ENCODE measurements at regions of chr11 and their contacts with region 1.

Region 1: GRCh38 chr11:11787305-11788062 is 54.3 kb upstream of the USP47 start:
- DNase-seq: peak; percentile 33 to 79 (median 71)
- ATAC-seq: peak; percentile 82
- H3K4me3 ChIP-seq: no peak overlapping the region
- H3K4me3 Mint-ChIP-seq: no peak overlapping the region
- H3K27ac ChIP-seq: no peak overlapping the region
- H3K27ac Mint-ChIP-seq: no peak overlapping the region
- H3K4me1 ChIP-seq: no peaks in the 10 kb centered on the region
- H3K4me1 Mint-ChIP-seq: no peaks in the 10 kb centered on the region
- H3K27me3 ChIP-seq: no peaks in the 10 kb centered on the region
- H3K27me3 Mint-ChIP-seq: peaks cover 7% of the 10 kb centered on the region
- CTCF ChIP-seq: peak; percentile 83

Region 2: DNA sequence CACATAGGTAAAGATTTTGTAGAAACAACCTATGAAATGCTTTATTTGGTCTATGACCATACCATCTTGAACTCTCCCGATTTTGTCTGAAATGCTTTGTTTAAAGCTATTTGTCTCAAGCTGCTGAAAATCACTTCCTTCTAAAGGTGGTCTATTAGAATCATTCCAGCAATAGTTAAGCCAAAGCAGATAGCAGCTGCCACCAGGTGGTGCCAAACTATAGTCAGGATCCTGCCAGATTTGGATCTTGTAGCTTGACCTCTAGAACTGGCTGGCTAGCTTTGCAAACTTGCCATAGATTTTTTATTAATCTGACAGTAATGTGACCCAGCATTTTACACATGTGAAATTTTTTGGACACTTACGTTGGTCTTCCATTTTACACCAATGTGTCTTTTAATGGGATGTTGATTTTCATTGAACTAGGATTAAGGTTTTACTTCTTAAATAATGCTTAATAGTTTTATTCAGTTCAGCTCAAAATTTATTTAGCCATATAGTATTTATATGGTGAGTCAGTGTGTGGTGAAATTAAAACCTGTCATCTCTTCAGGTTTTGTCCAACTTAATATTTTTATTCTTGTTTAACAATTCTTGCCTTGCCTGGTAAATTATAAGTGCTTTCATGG is 1016.7 kb before region 1 on chr11:
- CTCF ChIA-PET with region 1: interaction called, 10 read pairs
- POLR2A ChIA-PET with region 1: no interaction called
- intact Hi-C with region 1: loop called in 1 of 2 experiments (anchors 5 kb)
- DNase-seq: peak in 4 of 9 experiments; percentile 14 to 41 (median 29)
- ATAC-seq: no peak
- H3K4me3 ChIP-seq: no peak overlapping the region
- H3K4me3 Mint-ChIP-seq: no peak overlapping the region
- H3K27ac ChIP-seq: no peak overlapping the region
- H3K27ac Mint-ChIP-seq: no peak overlapping the region
- H3K4me1 ChIP-seq: no peaks in the 10 kb centered on the region
- H3K4me1 Mint-ChIP-seq: no peaks in the 10 kb centered on the region
- H3K27me3 ChIP-seq: no peaks in the 10 kb centered on the region
- H3K27me3 Mint-ChIP-seq: no peaks in the 10 kb centered on the region
- CTCF ChIP-seq: peak; percentile 52

Region 3: DNA sequence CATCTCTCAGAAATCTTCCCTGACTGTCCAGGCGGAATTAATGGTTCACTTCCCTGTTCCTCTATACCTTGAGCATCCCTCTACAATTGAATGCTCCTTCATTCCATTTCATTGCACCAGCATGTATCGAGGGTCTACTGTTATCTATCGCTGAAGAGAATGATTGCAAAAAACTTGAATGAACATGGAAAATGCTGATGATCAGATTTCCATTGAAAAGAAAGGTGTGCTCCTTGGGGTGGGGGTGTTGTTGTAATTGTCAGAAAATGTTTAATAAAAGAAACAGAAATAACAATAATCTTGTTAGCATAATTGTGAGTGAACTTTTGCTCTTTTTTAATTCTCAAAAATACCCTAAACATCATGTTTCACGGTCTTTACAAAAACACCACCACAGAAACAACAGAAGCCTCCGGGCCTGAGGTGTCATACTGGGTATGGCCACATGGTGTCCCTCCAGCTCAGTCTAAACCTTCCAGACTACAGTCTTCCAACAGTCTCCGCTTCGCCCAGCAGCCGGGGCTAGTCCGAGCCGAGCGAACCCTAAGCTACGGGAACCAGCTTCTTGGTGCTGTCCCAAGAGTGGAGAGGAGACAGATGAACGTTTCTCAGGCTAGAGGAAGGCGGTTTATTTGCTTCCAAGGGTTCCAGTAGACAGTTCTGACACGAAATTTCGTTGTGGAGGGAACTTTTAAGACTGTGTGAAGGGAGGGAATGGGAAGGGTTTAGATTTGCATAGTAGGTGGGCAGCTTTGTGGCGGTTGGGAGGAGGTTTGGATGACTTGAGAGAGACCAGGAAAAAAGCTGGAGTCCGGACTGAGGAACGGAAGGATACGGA is 853.8 kb before region 1 on chr11:
- CTCF ChIA-PET with region 1: interaction called, 23 read pairs
- POLR2A ChIA-PET with region 1: no interaction called
- intact Hi-C with region 1: loop called (anchors 1 kb)
- DNase-seq: peak; percentile 66 to 87 (median 82)
- ATAC-seq: peak; percentile 88
- H3K4me3 ChIP-seq: peak overlapping the region; percentile 50 to 53
- H3K4me3 Mint-ChIP-seq: peak overlapping the region; percentile 83
- H3K27ac ChIP-seq: no peak overlapping the region
- H3K27ac Mint-ChIP-seq: no peak overlapping the region
- H3K4me1 ChIP-seq: no peaks in the 10 kb centered on the region
- H3K4me1 Mint-ChIP-seq: peaks cover 20% of the 10 kb centered on the region
- H3K27me3 ChIP-seq: peaks cover 7 to 19% of the 10 kb centered on the region in 2 experiments
- H3K27me3 Mint-ChIP-seq: peaks cover 18% of the 10 kb centered on the region
- CTCF ChIP-seq: peak; percentile 98

Region 4: GRCh38 chr11:11036848-11037732 is 750.4 kb before region 1 on chr11:
- CTCF ChIA-PET with region 1: interaction called, 33 read pairs
- POLR2A ChIA-PET with region 1: interaction called, 3 read pairs
- intact Hi-C with region 1: no loop called
- DNase-seq: peak in 5 of 9 experiments; percentile 27 to 81 (median 51)
- ATAC-seq: peak; percentile 91
- H3K4me3 ChIP-seq: no peak overlapping the region
- H3K4me3 Mint-ChIP-seq: no peak overlapping the region
- H3K27ac ChIP-seq: no peak overlapping the region
- H3K27ac Mint-ChIP-seq: peak overlapping the region; percentile 74
- H3K4me1 ChIP-seq: peaks cover 16% of the 10 kb centered on the region
- H3K4me1 Mint-ChIP-seq: peaks cover 16% of the 10 kb centered on the region
- H3K27me3 ChIP-seq: no peaks in the 10 kb centered on the region
- H3K27me3 Mint-ChIP-seq: peaks cover 3% of the 10 kb centered on the region
- CTCF ChIP-seq: peak; percentile 61

Region 5: DNA sequence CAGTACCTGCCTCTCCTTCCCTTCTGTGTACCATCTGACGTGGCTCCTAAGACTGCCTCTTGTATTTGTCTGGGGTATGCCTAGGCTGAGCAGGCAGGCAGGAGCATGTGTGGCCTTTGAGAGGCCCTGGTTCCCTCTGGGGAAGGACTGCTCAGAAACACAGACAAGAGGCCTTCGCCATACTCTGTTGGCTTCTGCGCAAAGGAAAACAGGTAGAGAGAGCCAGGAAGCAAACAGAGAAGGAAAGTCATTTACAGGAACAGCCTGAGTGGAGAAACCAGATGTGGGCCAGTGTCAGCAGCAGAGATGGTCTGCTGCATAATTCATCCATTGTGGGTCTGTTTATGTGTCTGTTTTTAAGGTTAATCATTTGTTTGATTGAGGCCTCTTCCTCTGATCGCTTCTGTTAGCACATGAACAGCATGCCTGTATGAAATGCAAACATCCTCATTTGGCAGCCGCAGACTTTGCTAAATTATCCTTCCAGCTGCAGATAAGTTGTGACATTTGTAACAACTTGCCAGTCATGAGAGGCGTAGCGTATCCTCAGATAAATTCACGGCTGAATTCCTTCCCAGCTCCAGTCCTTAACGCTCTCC is 285.1 kb before region 1 on chr11:
- CTCF ChIA-PET with region 1: no interaction called
- POLR2A ChIA-PET with region 1: no interaction called
- intact Hi-C with region 1: no loop called
- DNase-seq: no peak
- ATAC-seq: no peak
- H3K4me3 ChIP-seq: no peak overlapping the region
- H3K4me3 Mint-ChIP-seq: no peak overlapping the region
- H3K27ac ChIP-seq: no peak overlapping the region
- H3K27ac Mint-ChIP-seq: no peak overlapping the region
- H3K4me1 ChIP-seq: no peaks in the 10 kb centered on the region
- H3K4me1 Mint-ChIP-seq: no peaks in the 10 kb centered on the region
- H3K27me3 ChIP-seq: peaks cover 0 to 2% of the 10 kb centered on the region in 2 experiments
- H3K27me3 Mint-ChIP-seq: peaks cover 2% of the 10 kb centered on the region
- CTCF ChIP-seq: no peak

Region 6: GRCh38 chr11:11806586-11806985 is 19.1 kb after region 1 on chr11:
- CTCF ChIA-PET with region 1: interaction called, 15 read pairs
- POLR2A ChIA-PET with region 1: no interaction called
- intact Hi-C with region 1: no loop called
- DNase-seq: no peak
- ATAC-seq: no peak
- H3K4me3 ChIP-seq: no peak overlapping the region
- H3K4me3 Mint-ChIP-seq: no peak overlapping the region
- H3K27ac ChIP-seq: no peak overlapping the region
- H3K27ac Mint-ChIP-seq: no peak overlapping the region
- H3K4me1 ChIP-seq: no peaks in the 10 kb centered on the region
- H3K4me1 Mint-ChIP-seq: no peaks in the 10 kb centered on the region
- H3K27me3 ChIP-seq: no peaks in the 10 kb centered on the region
- H3K27me3 Mint-ChIP-seq: peaks cover 6% of the 10 kb centered on the region
- CTCF ChIP-seq: no peak

Measured in CD8-positive, alpha-beta T cell (primary cell).